ENCODE measurements at regions of chr13 and their contacts with region 1.

Region 1: GRCh38 chr13:23810685-23811240 is 78.4 kb downstream of the MIPEP start:
- DNase-seq: no peak
- ATAC-seq: peak; percentile 68
- H3K4me3 Mint-ChIP-seq: peak overlapping the region; percentile 20
- H3K27ac Mint-ChIP-seq: no peak overlapping the region
- H3K4me1 Mint-ChIP-seq: peaks cover 53% of the 10 kb centered on the region
- H3K27me3 Mint-ChIP-seq: no peaks in the 10 kb centered on the region
- CTCF ChIP-seq: no peak

Region 2: DNA sequence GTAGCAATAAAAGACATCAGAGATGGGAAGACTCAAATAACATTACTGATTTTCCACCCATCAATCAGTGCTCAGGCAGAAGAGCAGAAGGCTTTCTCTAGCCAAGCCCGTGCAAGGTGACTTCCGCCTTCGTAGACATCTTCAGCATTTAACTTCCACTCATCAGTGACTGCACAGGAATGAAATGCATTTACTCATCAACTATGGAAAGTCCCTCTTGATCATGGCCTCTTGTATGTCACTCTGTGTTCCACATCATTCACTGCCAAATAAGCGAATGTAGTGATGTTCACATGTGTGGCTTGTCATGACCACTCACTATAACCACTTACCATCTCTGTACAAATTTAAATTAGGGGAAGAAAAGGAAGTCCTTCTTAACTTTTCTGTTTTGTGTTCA is 426.7 kb before region 1 on chr13:
- CTCF ChIA-PET with region 1: no interaction called
- POLR2A ChIA-PET with region 1: no interaction called
- intact Hi-C with region 1: loop called (anchors 1 kb)
- DNase-seq: no peak
- ATAC-seq: peak; percentile 98
- H3K4me3 Mint-ChIP-seq: peak overlapping the region; percentile 36
- H3K27ac Mint-ChIP-seq: peak overlapping the region; percentile 87
- H3K4me1 Mint-ChIP-seq: peaks cover 35% of the 10 kb centered on the region
- H3K27me3 Mint-ChIP-seq: no peaks in the 10 kb centered on the region
- CTCF ChIP-seq: no peak

Region 3: DNA sequence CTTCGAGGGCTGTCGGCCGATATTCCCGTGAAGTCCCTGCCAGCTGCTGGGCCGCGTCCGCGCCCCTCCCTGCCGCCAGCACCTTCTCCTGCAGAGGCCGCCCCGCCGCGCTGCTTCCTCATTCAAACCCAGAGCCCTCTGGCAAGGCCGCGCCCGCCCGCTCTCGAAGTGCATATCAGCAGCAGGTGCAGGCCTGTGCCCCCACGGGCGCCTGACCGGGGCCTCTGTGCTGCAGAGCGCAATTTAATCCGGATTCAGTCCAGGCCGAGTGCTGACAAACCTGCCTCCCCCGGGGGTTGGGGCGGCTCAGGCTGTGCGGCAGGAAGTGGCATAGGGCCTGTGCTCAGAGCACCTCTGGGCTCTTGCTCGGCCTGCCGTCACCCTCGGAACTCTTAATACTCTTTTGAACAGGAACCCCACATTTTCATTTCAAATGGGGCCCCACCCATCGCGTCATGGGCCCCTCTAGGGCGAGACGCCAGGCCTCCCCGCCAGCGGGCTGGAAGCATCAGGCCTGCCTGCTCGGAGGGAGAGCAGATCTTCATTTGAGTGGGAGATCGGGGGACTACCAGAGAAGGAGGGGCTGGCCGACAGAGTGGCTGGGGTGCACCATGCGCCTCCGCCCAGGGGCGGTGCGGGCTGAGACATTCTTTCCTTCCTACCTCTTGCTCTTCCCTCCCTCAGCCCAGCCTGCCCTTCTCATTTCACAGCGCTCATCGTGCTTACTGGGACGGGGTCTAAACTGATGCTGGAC is 114.9 kb before region 1 on chr13:
- CTCF ChIA-PET with region 1: no interaction called
- POLR2A ChIA-PET with region 1: no interaction called
- intact Hi-C with region 1: loop called (anchors 1 kb)
- DNase-seq: peak; percentile 65
- ATAC-seq: peak; percentile 98
- H3K4me3 Mint-ChIP-seq: peak overlapping the region; percentile 77
- H3K27ac Mint-ChIP-seq: peak overlapping the region; percentile 93
- H3K4me1 Mint-ChIP-seq: peaks cover 17% of the 10 kb centered on the region
- H3K27me3 Mint-ChIP-seq: peaks cover 5% of the 10 kb centered on the region
- CTCF ChIP-seq: no peak

Region 4: DNA sequence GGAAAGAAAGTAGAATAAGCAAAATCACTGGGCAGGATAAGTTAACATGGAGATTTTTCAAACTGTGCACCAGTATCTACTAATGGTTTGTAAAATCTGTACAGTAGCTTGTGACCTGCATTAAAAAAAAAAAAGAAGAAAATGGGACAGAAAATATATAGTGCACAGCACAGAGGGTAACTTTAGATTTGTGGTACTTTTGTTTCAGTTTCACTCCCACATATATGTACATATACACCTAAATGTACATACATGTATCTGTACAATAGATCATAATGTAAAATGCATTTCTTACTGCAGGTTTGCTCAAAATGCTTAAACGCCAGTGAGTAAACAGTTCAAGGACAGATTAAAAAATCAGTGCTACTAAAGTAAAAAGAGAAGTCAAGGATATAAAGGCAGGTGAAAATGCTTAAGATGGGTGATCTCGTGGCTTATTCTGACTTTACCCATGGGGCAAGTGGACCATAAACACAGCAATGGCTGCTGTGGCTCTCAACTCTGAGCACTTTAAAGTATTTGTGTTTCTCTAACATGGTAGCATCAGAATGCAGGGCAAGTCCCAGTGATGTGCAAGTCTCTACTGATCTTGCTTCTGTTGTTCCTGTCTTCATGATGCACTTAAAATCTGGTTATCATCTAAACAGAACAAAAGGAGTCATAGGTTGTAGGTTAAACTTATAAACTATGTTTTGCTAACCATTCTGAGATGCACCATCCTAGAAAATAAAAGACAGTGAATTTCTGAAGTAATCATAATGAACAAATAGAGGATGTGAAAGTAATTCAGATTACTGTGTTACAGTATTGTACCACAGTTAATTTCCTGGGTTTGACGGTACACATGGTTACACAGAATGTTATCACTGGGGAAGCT is 33.8 kb before region 1 on chr13:
- CTCF ChIA-PET with region 1: interaction called, 3 read pairs
- POLR2A ChIA-PET with region 1: no interaction called
- intact Hi-C with region 1: loop called (anchors 1 kb)
- DNase-seq: no peak
- ATAC-seq: peak; percentile 95
- H3K4me3 Mint-ChIP-seq: no peak overlapping the region
- H3K27ac Mint-ChIP-seq: no peak overlapping the region
- H3K4me1 Mint-ChIP-seq: peaks cover 26% of the 10 kb centered on the region
- H3K27me3 Mint-ChIP-seq: peaks cover 48% of the 10 kb centered on the region
- CTCF ChIP-seq: no peak

Region 5: DNA sequence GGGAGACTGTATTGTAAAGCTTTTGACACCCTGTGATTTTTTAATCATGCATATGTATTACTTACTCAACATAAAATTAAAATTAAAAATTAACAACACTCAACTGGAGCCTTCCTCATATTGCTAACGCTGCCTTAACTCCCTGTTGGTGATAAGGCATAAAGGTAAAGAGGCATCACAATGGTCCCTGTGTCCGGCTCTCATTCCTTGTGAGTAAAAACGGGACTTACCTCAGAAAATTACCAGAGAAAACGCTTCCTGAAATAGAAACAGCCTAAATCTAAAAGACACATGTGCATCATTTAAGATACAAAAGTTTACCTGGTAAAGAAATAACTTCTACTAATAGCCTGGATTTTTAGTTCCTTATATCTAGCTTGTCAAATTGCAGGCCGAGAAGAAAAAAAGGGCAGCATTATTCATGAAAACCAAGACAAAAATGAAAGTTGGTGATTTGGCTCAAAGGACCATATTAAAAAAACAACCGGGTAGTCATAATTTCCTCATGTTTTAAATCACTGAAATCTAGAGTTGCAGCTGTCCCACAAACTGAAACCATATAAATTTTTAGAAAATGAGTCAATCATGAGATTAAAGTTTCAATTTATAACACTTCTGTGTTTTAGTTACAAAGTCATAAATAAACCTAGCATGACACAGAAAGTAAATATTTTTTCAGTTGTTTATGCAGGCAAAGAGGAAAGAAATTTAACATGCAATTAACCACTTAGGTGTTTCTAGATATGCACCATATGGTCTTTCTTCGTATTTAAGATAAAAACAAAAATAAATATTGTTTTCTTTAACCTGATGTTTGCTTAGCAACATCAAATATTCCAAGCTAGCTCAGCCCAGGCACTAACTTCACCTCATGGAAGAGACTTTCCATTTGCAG is 16.2 kb before region 1 on chr13:
- CTCF ChIA-PET with region 1: interaction called, 3 read pairs
- POLR2A ChIA-PET with region 1: no interaction called
- intact Hi-C with region 1: loop called (anchors 1 kb)
- DNase-seq: no peak
- ATAC-seq: no peak
- H3K4me3 Mint-ChIP-seq: peak overlapping the region; percentile 6
- H3K27ac Mint-ChIP-seq: no peak overlapping the region
- H3K4me1 Mint-ChIP-seq: peaks cover 16% of the 10 kb centered on the region
- H3K27me3 Mint-ChIP-seq: no peaks in the 10 kb centered on the region
- CTCF ChIP-seq: no peak

Region 6: GRCh38 chr13:23845105-23845725 is 34.5 kb after region 1 on chr13:
- CTCF ChIA-PET with region 1: no interaction called
- POLR2A ChIA-PET with region 1: interaction called, 4 read pairs
- intact Hi-C with region 1: loop called (anchors 1 kb)
- DNase-seq: no peak
- ATAC-seq: no peak
- H3K4me3 Mint-ChIP-seq: peak overlapping the region; percentile 15
- H3K27ac Mint-ChIP-seq: no peak overlapping the region
- H3K4me1 Mint-ChIP-seq: peaks cover 63% of the 10 kb centered on the region
- H3K27me3 Mint-ChIP-seq: no peaks in the 10 kb centered on the region
- CTCF ChIP-seq: no peak

Measured in activated B cell treated with CpG ODN at 0.5 μM for 24 hours (primary cell).